ENCODE measurements at regions of chr15 and their contacts with region 1.

Region 1: GRCh38 chr15:40263024-40263754 is 19.7 kb downstream of the ANKRD63 start:
- DNase-seq: no peak
- ATAC-seq: no peak
- H3K4me3 ChIP-seq: no peak overlapping the region
- H3K27ac ChIP-seq: no peak overlapping the region
- H3K4me1 ChIP-seq: no peaks in the 10 kb centered on the region
- H3K27me3 ChIP-seq: no peaks in the 10 kb centered on the region
- CTCF ChIP-seq: no peak
- POLR2A ChIP-seq: no peak

Region 2: GRCh38 chr15:40226736-40227135 is 36.5 kb before region 1 on chr15:
- intact Hi-C with region 1: loop called in 1 of 10 experiments (anchors 5 kb)
- DNase-seq: no peak
- ATAC-seq: no peak
- H3K4me3 ChIP-seq: no peak overlapping the region
- H3K27ac ChIP-seq: no peak overlapping the region
- H3K4me1 ChIP-seq: no peaks in the 10 kb centered on the region
- H3K27me3 ChIP-seq: no peaks in the 10 kb centered on the region
- CTCF ChIP-seq: no peak
- POLR2A ChIP-seq: no peak

Region 3: DNA sequence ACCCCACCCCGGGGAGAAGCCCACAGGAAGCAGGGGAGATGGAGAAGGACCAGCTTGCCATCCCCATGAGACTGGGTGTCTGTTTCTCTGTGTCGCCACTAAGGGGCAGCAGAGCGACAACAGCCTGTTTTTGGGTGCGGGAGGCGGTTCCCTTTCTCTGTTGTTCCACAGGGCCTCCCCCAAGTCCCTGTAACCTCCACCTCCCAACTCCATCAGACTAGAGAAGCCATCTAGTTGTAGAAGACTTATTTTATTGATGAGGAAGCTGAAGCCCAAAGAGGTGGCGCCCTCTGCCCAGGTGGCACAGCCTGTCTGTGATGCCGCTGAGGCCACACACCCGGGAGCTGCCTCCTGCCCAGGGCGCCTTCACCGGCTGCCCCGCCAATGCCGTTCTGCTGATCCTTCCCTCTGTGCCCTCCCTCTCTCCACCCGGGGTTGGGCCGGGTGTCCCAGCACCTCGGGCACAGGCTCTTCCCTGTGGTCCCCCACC is 81.5 kb after region 1 on chr15:
- intact Hi-C with region 1: no loop called
- DNase-seq: peak in 3 of 5 donors; percentile 61 to 84 (median 66)
- ATAC-seq: no peak
- H3K4me3 ChIP-seq: no peak overlapping the region
- H3K27ac ChIP-seq: peak overlapping the region in 2 of 12 donors; percentile 80 to 96
- H3K4me1 ChIP-seq: peaks cover 14 to 58% (median 41%) of the 10 kb centered on the region in 12 donors
- H3K27me3 ChIP-seq: no peaks in the 10 kb centered on the region
- CTCF ChIP-seq: peak; percentile 58 to 85 (median 77)
- POLR2A ChIP-seq: no peak

Measured in heart left ventricle (tissue), 16 donors.